IMR-90 (cell line): ENCODE measurements at regions of chr6 and their contacts with region 1.

Region 1: DNA sequence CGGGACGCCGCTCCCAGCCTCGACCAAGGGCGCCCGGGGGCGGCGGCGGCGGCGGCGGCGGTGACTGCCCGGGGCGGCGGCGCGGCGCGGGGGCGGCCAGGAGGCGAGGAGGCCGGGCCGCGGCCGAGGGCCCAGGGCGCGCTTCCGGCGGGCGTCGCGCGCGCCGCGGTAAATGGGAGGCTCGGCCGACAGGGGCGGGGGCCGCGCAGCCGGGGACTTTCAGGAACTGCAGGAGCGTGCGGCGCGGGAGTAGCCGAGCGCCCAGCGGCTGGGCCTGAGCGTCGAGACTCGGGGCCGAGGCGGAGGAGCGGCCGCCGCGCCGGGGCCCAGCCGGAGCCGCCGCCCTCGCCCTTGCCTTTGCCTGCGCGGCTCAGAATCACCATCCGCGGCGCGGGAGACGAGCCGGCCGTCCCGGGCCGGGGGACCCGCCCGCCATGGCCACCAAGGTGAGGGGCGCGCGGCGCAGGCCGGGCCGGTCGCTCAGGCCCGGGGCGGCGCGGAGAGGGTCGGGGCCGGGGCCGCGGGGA is at the start of gene SNX9:
- DNase-seq: peak; percentile 72
- ATAC-seq: peak; percentile 86
- H3K4me3 ChIP-seq: peak within 1 kb of the TSS; percentile 57
- H3K27ac ChIP-seq: peak within 1 kb of the TSS; percentile 91
- H3K4me1 ChIP-seq: peaks cover 7% of the 10 kb centered on the region; the same call in 1 of the 2 replicates
- H3K27me3 ChIP-seq: no peaks in the 10 kb centered on the region
- CTCF ChIP-seq: no peak
- POLR2A ChIP-seq: peak; percentile 87
- RAD21 ChIP-seq: peak; percentile 12; the same call in 1 of the 2 replicates
- total RNA-seq, gene SNX9: 41.2 and 41.9 TPM in 2 replicates

Region 2: GRCh38 chr6:157756708-157757429 is 66.2 kb before region 1 on chr6:
- CTCF ChIA-PET with region 1: interaction called, 3 read pairs
- POLR2A ChIA-PET with region 1: no interaction called
- dilution Hi-C with region 1: no loop called
- in situ Hi-C with region 1: loop called (anchors 5 kb)
- intact Hi-C with region 1: loop called (anchors 2 kb)
- DNase-seq: peak; percentile 73
- ATAC-seq: peak; percentile 83
- H3K4me3 ChIP-seq: no peak overlapping the region
- H3K27ac ChIP-seq: peak overlapping the region; percentile 40; the same call in 1 of the 2 replicates
- H3K4me1 ChIP-seq: peaks cover 18% of the 10 kb centered on the region
- H3K27me3 ChIP-seq: no peaks in the 10 kb centered on the region; the same call in 1 of the 2 replicates
- CTCF ChIP-seq: peak; percentile 92
- POLR2A ChIP-seq: no peak
- RAD21 ChIP-seq: peak; percentile 92

Region 3: DNA sequence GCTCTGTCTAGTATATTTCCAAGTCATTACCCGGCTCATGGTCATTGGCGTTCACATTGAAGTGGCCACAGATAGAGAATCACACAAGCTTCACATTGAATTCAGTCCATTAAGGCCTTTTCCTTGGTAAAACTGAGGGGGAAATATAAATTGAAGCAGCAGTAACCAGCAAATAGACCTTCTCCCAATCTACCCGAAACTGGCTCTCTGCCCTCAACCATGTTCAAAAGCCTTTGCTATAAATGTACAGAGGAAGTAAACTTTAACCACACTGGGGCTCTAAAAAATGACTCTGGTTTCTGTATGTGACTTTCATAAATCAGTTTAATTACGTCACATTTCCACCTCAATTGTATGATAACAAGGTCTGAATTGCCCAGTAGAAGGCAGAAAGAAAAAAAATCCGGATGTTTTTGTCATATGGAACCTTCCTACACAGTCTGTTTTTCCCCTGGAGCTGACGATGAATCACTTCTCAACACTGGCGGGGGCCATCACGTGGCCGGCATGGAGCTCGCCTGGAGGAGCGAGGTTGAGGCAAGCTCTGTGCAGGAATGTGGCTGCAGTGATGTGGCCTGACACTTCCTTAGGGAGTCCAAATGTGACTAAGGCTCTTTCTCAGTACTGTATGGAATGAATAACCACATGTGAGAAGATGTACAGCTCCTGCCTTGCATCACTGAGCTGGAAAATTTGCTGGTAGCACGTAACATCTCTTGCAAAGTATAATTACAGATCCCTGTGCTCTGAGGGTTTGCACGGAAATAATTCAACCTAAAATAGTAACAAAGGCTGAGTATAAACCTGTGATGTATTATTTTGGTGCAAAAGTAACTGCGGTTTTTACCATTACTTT is 58.7 kb before region 1 on chr6:
- CTCF ChIA-PET with region 1: no interaction called
- POLR2A ChIA-PET with region 1: no interaction called
- dilution Hi-C with region 1: no loop called
- in situ Hi-C with region 1: loop called (anchors 5 kb)
- intact Hi-C with region 1: loop called (anchors 1 kb)
- DNase-seq: peak; percentile 100
- ATAC-seq: peak; percentile 95
- H3K4me3 ChIP-seq: no peak overlapping the region
- H3K27ac ChIP-seq: peak overlapping the region; percentile 74
- H3K4me1 ChIP-seq: peaks cover 32% of the 10 kb centered on the region
- H3K27me3 ChIP-seq: no peaks in the 10 kb centered on the region
- CTCF ChIP-seq: no peak
- POLR2A ChIP-seq: peak; percentile 58
- RAD21 ChIP-seq: peak; percentile 23

Region 4: DNA sequence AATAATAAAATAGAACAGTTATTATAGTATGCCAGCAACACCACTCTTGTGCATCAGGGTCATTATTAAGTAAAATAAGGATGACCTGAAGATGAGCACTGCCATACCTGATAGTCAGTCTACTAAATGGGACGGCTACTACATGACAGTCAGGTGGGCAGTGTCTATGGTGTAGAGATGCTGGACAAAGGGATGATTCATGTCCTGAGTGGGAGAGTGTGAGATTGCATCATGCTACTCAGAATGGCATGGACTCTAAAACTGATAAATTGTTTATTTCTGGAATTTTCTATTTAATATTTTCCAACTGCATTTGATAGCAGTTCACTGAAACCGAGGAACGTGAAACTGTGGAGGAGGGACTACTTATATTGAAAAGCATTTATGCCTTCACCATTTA is 38.8 kb after region 1 on chr6:
- CTCF ChIA-PET with region 1: no interaction called
- POLR2A ChIA-PET with region 1: no interaction called
- dilution Hi-C with region 1: no loop called
- in situ Hi-C with region 1: no loop called
- intact Hi-C with region 1: loop called (anchors 2 kb)
- DNase-seq: peak; percentile 71
- ATAC-seq: no peak
- H3K4me3 ChIP-seq: no peak overlapping the region
- H3K27ac ChIP-seq: no peak overlapping the region
- H3K4me1 ChIP-seq: peaks cover 23% of the 10 kb centered on the region
- H3K27me3 ChIP-seq: no peaks in the 10 kb centered on the region
- CTCF ChIP-seq: no peak
- POLR2A ChIP-seq: no peak
- RAD21 ChIP-seq: no peak